ENCODE measurements at regions of chr13 and their contacts with region 1.

Region 1: DNA sequence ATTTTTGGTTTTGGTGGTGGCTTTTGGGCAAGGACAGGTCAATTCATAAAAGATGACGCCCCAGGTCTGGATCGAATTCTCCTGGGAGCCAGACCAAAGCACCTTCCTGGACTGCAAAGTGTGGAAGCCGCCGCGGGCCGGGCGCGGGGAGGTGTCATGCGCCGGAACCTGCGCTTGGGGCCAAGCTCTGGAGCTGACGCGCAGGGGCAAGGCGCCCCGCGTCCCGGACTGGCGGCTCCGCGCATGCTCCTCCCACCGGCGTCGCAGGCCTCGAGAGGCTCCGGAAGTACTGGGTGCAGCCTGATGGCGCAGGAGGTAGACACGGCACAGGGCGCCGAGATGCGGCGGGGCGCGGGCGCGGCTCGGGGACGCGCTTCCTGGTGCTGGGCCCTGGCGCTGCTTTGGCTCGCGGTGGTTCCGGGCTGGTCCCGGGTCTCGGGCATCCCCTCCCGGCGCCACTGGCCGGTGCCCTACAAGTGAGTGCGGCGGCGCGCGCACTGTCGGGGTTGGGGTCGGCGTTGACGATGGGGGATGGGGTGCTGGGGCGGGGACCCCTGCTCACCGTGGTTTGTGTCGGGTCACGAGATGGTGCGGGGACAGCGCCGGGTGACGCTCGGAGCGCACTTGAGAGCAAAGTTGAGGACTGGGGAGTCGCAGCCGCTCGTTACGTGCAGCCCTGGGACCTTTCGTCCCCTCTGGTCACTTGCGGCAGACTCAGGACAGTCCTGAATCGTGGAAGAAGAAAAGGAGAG is at the start of gene CLN5:
- DNase-seq: peak; percentile 89 to 98 (median 96)
- ATAC-seq: peak; percentile 89 to 90
- H3K4me3 Mint-ChIP-seq: peak within 1 kb of the TSS; percentile 88 to 99 (median 96)
- H3K27ac Mint-ChIP-seq: peak within 1 kb of the TSS; percentile 97 to 100 (median 100)
- H3K4me1 Mint-ChIP-seq: peaks cover 22 to 54% (median 51%) of the 10 kb centered on the region in 4 donors
- H3K27me3 Mint-ChIP-seq: peaks cover 0 to 7% (median 0%) of the 10 kb centered on the region in 5 donors
- polyA plus RNA-seq, gene CLN5: 16.9 to 30.8 (median 25.8) TPM

Region 2: GRCh38 chr13:76980075-76980718 is 11.8 kb before region 1 on chr13:
- POLR2A ChIA-PET with region 1: interaction called, 34 read pairs
- DNase-seq: peak; percentile 67 to 95 (median 86)
- ATAC-seq: peak; percentile 100
- H3K4me3 Mint-ChIP-seq: peak overlapping the region; percentile 49 to 72 (median 64)
- H3K27ac Mint-ChIP-seq: no peak overlapping the region
- H3K4me1 Mint-ChIP-seq: peaks cover 4 to 9% (median 7%) of the 10 kb centered on the region in 4 donors
- H3K27me3 Mint-ChIP-seq: peaks cover 5 to 27% (median 8%) of the 10 kb centered on the region in 5 donors

Region 3: DNA sequence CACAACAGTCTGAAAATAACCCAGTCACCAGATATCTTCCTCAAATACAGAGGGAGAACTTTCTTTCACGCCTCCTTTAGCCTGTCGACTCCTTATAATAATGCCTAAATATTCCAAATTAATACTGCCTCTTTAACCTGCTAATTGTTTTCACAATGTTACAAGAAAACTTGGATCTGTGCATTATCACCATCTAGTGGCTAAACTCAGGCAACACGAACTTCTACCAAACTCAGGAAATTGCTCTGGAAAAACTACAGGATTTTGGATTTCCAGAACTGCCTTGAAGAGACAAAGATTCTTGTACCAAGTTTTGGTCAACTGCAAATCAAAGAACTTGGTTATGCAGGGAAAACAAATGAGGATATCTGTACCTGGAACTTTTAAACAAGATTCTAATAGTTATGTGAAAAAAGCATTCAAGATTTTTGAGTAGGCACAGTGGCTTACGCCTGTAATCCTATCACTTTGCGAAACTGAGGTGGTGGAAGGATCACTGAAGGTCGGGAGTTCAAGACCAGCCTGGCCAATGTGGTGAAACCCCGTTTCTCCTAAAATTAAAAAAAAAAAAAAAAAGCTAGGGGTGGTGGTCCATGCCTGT is 10.7 kb after region 1 on chr13:
- POLR2A ChIA-PET with region 1: interaction called, 40 read pairs
- DNase-seq: no peak
- ATAC-seq: no peak
- H3K4me3 Mint-ChIP-seq: no peak overlapping the region
- H3K27ac Mint-ChIP-seq: peak overlapping the region in 5 of 10 donors; percentile 12 to 85 (median 67)
- H3K4me1 Mint-ChIP-seq: peaks cover 21 to 58% (median 44%) of the 10 kb centered on the region in 4 donors
- H3K27me3 Mint-ChIP-seq: no peaks in the 10 kb centered on the region

Region 4: DNA sequence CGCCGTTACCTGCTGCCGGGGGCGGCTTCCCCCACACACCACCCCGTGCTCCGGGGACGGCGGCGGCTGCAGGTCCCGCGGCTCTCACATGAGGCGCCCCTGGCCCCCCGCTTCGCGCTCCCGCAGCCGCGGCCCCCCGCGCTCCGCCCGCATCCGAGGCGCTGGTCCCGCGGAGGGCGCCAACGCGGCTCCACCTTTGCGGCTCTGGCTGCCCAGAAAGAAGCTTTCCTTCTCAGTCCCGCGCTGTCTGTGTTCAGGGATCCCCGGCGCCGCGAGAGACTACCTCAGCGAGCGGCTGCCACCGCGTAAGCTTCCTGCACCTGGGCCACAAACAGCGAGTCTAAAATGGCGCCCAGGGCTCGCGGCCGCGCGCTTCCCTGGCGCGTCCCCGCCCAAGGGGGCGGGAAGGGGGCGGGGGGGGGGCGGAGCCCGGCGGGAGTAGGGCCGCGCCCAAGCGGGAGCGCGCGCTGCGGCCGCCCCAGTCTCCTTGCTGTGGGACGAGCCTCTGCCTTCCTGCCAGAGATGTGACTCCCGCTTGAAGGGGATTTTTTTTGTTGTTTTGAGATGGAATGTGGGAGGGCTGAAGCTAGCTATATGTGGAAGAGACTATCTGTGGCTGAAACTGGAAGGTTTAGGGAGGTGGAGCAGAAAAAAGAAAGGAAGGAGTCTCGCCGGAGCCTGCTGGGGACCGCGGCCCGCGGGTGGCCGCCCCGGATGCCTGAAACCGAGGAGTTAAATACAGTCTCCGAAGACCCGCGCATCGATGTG is 35.0 kb after region 1 on chr13 and contains the start of gene FBXL3:
- POLR2A ChIA-PET with region 1: interaction called, 182 read pairs
- DNase-seq: peak; percentile 77 to 91 (median 81)
- ATAC-seq: peak; percentile 72 to 75
- H3K4me3 Mint-ChIP-seq: peak within 1 kb of the TSS; percentile 90 to 99 (median 98)
- H3K27ac Mint-ChIP-seq: peak within 1 kb of the TSS; percentile 94 to 99 (median 96)
- H3K4me1 Mint-ChIP-seq: peaks cover 32 to 59% (median 49%) of the 10 kb centered on the region in 4 donors
- H3K27me3 Mint-ChIP-seq: peaks cover 0 to 2% (median 0%) of the 10 kb centered on the region in 5 donors
- polyA plus RNA-seq, gene FBXL3: 29.3 to 44.7 (median 32.6) TPM